Left ventricle myocardium inferior (tissue), 1 donor: ENCODE measurements at regions of chr14 and their contacts with region 1.

Region 1: DNA sequence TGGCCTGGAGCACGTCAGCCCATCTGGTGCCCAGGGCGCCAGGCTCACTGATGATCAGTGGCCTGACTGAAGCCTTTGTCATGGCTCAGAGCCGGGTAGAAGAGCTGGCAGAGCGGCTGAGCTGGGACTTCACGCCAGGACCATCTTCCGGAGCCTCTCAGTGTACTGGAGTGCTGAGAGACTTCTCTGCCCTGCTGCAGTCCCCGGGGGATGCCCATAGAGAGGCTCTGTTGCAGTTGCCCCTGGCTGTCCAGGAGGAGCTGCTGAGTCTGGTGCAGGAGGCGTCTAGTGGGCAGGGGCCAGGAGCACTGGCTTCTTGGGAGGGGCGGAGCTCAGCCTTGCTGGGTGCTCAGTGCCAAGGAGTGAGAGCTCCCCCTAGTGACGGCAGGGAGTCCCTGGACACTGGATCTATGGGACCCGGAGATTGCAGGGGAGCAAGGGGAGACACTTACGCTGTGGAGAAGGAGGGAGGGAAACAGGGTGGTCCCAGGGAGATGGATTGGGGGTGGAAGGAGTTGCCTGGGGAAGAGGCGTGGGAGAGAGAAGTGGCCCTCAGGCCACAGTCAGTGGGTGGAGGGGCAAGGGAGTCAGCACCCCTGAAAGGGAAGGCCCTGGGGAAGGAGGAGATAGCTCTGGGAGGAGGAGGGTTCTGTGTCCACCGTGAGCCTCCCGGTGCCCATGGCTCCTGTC is 2.0 kb downstream of the KHNYN start:
- DNase-seq: peak; percentile 88
- H3K4me3 ChIP-seq: peak overlapping the region; percentile 81
- H3K27ac ChIP-seq: peak overlapping the region; percentile 96
- H3K4me1 ChIP-seq: peaks cover 64% of the 10 kb centered on the region
- H3K27me3 ChIP-seq: no peaks in the 10 kb centered on the region
- CTCF ChIP-seq: peak; percentile 94

Region 2: GRCh38 chr14:24332268-24332993 is 99.3 kb before region 1 on chr14:
- intact Hi-C with region 1: loop called (anchors 5 kb)
- DNase-seq: peak; percentile 52
- H3K4me3 ChIP-seq: peak overlapping the region; percentile 78
- H3K27ac ChIP-seq: peak overlapping the region; percentile 95
- H3K4me1 ChIP-seq: peaks cover 40% of the 10 kb centered on the region
- H3K27me3 ChIP-seq: peaks cover 49% of the 10 kb centered on the region
- CTCF ChIP-seq: peak; percentile 77

Region 3: DNA sequence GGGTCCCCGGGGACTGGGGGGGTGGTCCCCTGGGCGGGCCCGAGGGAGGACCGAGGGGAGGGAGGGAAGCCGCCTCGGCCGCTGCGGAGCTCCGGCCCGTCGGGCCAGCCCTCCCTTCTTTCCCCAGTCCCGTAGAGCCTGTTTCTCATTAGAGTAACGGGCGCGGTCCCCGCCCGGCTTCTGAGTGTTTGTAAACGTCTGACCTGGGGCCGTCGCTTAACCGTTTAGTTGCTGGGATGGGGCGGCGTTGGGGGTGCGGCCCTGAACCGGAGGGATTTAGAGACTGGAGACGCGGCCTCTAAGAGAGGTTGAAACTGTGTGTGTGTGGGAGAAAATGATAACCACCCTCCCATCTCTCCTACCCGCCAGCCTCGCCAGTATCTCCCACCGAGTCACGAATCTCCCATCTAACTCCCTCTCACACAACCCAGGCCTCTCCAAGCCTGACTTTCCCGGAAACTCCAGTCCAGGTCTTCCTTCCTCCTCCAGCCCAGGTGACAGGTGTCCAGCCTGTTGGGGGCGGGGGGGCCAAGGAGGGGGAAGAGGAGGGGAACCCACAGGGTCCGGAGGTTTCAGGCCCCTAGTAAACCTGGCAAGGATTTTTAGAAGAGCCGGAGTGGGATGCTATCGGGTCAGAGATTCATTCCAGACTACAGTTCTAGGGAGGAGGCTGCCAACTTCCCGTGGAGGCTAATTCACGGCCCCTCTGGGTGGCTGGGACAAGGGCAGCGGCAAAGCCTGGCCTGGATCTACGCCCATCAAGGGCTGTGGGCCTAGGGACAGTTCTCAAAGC is 64.8 kb before region 1 on chr14:
- intact Hi-C with region 1: loop called (anchors 5 kb)
- DNase-seq: peak; percentile 90
- H3K4me3 ChIP-seq: peak overlapping the region; percentile 70
- H3K27ac ChIP-seq: peak overlapping the region; percentile 93
- H3K4me1 ChIP-seq: peaks cover 44% of the 10 kb centered on the region
- H3K27me3 ChIP-seq: peaks cover 55% of the 10 kb centered on the region
- CTCF ChIP-seq: no peak